ENCODE measurements at regions of chr10 and their contacts with region 1.

Region 1: DNA sequence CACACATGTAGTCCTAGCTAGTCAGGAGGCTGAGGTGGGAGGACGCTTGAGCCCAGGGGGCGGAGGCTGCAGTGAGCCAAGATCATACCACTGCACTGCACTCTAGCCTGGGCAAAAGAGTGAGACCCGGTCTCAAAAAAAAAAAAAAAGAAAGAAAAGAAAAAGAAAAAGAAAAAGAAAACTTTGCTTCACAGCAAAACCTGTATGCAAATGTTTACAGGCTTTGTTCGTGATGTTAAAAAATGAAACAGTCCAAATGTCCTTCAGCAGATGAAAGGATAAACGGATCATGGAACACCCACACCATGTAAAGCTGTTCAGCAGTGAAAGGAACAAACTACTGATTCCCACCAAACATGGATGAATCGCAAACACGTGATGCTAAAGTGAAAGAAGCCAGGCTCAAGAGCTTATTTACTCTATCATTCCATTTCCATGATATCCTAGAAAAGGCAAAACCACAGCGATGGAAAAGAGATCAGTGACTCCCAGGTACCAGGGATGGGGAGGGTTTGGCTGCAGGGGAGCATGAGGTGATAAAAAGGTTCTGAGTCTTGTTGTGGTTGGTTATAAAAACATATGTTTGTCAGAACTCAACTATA is 15.1 kb downstream of the LRRC20 start:
- DNase-seq: peak in 1 of 2 donors; percentile 38
- H3K4me3 ChIP-seq: no peak overlapping the region
- H3K27ac ChIP-seq: peak overlapping the region in 2 of 5 donors; percentile 10 to 23
- H3K4me1 ChIP-seq: peaks cover 11 to 18% (median 15%) of the 10 kb centered on the region in 4 donors
- H3K27me3 ChIP-seq: no peaks in the 10 kb centered on the region
- CTCF ChIP-seq: no peak
- EP300 ChIP-seq: no peak
- POLR2A ChIP-seq: no peak

Region 2: GRCh38 chr10:70221030-70221429 is 146.3 kb before region 1 on chr10:
- intact Hi-C with region 1: loop called (anchors 5 kb)
- DNase-seq: no peak
- H3K4me3 ChIP-seq: peak overlapping the region in 1 of 4 donors; percentile 6
- H3K27ac ChIP-seq: peak overlapping the region in 3 of 5 donors; percentile 24 to 49 (median 25)
- H3K4me1 ChIP-seq: peaks cover 4 to 21% (median 13%) of the 10 kb centered on the region in 4 donors
- H3K27me3 ChIP-seq: no peaks in the 10 kb centered on the region
- CTCF ChIP-seq: no peak
- EP300 ChIP-seq: no peak
- POLR2A ChIP-seq: no peak

Region 3: GRCh38 chr10:71708301-71708703 is 1341.0 kb after region 1 on chr10:
- intact Hi-C with region 1: no loop called
- DNase-seq: peak; percentile 62 to 81
- H3K4me3 ChIP-seq: no peak overlapping the region
- H3K27ac ChIP-seq: no peak overlapping the region
- H3K4me1 ChIP-seq: peaks cover 8 to 28% (median 17%) of the 10 kb centered on the region in 4 donors
- H3K27me3 ChIP-seq: peaks cover 0 to 3% (median 0%) of the 10 kb centered on the region in 3 donors
- CTCF ChIP-seq: peak in 5 of 7 experiments; percentile 61 to 86 (median 69)
- EP300 ChIP-seq: no peak
- POLR2A ChIP-seq: no peak

Measured in stomach (tissue), 19 donors.